Activated CD4-positive, alpha-beta memory T cell treated with anti-CD3 and anti-CD28 coated beads for 36 hours (primary cell): ENCODE measurements at regions of chr18 and their contacts with region 1.

Region 1: GRCh38 chr18:24019641-24020331 is 5.2 kb downstream of the TTC39C start:
- DNase-seq: peak; percentile 78
- H3K4me3 Mint-ChIP-seq: peak overlapping the region; percentile 75
- H3K27ac Mint-ChIP-seq: peak overlapping the region; percentile 89
- H3K4me1 Mint-ChIP-seq: peaks cover 85% of the 10 kb centered on the region
- H3K27me3 Mint-ChIP-seq: no peaks in the 10 kb centered on the region

Region 2: DNA sequence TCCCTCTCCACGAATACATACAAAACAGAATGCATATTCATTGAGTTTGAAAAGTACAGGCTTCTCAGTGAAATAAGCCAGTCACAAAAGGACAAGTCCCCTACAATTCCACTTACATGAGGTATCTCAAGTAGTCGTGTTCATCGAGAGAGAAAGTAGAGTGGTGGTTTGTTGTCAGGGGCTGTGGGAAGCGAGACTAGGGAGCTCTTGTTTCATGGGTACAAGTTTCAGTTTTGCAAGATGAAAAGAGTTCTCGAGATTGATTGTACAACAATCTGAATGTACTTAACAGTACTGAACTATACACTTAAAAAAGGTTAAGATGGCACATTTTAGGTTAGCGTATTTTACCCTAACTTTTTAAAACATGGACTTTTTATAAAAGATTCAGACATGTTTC is 76.7 kb before region 1 on chr18:
- CTCF ChIA-PET with region 1: no interaction called
- POLR2A ChIA-PET with region 1: no interaction called
- intact Hi-C with region 1: loop called (anchors 2 kb)
- DNase-seq: peak; percentile 78
- H3K4me3 Mint-ChIP-seq: peak overlapping the region; percentile 13
- H3K27ac Mint-ChIP-seq: no peak overlapping the region
- H3K4me1 Mint-ChIP-seq: peaks cover 36% of the 10 kb centered on the region
- H3K27me3 Mint-ChIP-seq: peaks cover 8% of the 10 kb centered on the region

Region 3: GRCh38 chr18:23994361-23994902 is 25.4 kb before region 1 on chr18:
- CTCF ChIA-PET with region 1: interaction called, 5 read pairs
- POLR2A ChIA-PET with region 1: interaction called, 8 read pairs
- intact Hi-C with region 1: loop called (anchors 1 kb)
- DNase-seq: peak; percentile 64
- H3K4me3 Mint-ChIP-seq: peak overlapping the region; percentile 76
- H3K27ac Mint-ChIP-seq: peak overlapping the region; percentile 86
- H3K4me1 Mint-ChIP-seq: peaks cover 73% of the 10 kb centered on the region
- H3K27me3 Mint-ChIP-seq: no peaks in the 10 kb centered on the region

Region 4: DNA sequence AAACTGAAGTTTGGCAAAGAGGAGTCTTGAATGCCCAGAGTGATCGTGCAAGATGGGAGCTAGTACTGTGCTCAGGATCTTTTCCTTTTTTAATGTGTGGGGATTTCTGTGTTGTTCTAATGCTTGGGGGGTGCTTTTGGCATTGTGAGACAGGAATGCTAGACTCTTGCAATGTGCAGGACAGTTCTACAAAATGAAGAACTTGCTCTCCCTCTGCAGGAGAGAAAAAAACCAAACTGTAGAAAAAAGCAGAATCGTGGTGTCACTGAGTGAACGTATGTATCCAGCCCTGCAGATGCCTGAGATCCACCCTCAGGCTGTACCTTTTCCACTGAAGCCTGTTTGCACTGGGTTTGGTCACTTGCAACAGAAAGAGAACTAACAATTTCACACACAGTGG is 17.3 kb before region 1 on chr18:
- CTCF ChIA-PET with region 1: interaction called, 5 read pairs
- POLR2A ChIA-PET with region 1: interaction called, 8 read pairs
- intact Hi-C with region 1: loop called (anchors 1 kb)
- DNase-seq: no peak
- H3K4me3 Mint-ChIP-seq: no peak overlapping the region
- H3K27ac Mint-ChIP-seq: no peak overlapping the region
- H3K4me1 Mint-ChIP-seq: peaks cover 77% of the 10 kb centered on the region
- H3K27me3 Mint-ChIP-seq: no peaks in the 10 kb centered on the region

Region 5: DNA sequence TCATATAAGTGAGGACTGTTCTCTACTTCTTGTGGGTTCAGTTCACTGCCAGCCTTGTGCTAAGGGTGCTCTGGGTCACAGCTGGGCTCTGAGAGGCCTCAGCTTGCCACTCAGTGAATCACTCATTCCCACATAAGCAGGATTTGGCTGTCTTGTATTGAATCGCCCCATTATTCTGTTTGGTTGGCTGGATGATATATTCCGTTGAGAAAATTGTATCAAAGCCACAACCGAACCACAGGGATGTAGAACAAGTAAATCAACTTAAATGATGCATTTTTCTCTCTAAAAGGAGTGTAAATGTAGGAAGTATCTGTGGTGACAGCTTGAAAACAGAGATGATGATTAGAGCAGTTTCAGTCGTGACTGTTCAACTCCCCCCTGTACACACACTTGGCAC is 34.3 kb after region 1 on chr18:
- CTCF ChIA-PET with region 1: no interaction called
- POLR2A ChIA-PET with region 1: interaction called, 6 read pairs
- intact Hi-C with region 1: loop called (anchors 1 kb)
- DNase-seq: peak; percentile 60
- H3K4me3 Mint-ChIP-seq: no peak overlapping the region
- H3K27ac Mint-ChIP-seq: peak overlapping the region; percentile 20
- H3K4me1 Mint-ChIP-seq: peaks cover 80% of the 10 kb centered on the region
- H3K27me3 Mint-ChIP-seq: no peaks in the 10 kb centered on the region

Region 6: DNA sequence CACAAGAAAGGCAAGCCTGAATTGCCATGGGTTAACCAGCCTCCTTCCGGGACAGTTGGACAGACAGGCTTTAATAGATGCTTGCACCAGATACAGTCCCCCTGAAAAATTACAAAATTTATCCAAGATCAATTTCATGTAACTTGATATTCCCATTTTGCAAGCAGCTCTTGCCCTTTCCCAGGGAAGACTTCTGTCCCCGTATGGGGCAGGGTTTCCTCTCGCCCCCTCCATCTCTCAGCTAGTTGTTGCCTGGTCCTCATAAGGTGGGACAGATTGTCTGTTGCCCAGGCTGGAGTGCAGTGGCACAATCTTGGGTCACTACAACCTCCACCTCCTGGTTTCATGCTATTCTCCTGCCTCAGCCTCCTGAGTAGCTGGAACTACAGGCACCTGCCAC is 55.9 kb after region 1 on chr18:
- CTCF ChIA-PET with region 1: interaction called, 3 read pairs
- POLR2A ChIA-PET with region 1: interaction called, 3 read pairs
- intact Hi-C with region 1: loop called (anchors 1 kb)
- DNase-seq: no peak
- H3K4me3 Mint-ChIP-seq: peak overlapping the region; percentile 14
- H3K27ac Mint-ChIP-seq: peak overlapping the region; percentile 63
- H3K4me1 Mint-ChIP-seq: peaks cover 56% of the 10 kb centered on the region
- H3K27me3 Mint-ChIP-seq: no peaks in the 10 kb centered on the region

Region 7: GRCh38 chr18:24108639-24109306 is 89.0 kb after region 1 on chr18:
- CTCF ChIA-PET with region 1: no interaction called
- POLR2A ChIA-PET with region 1: no interaction called
- intact Hi-C with region 1: no loop called
- DNase-seq: no peak
- H3K4me3 Mint-ChIP-seq: no peak overlapping the region
- H3K27ac Mint-ChIP-seq: peak overlapping the region; percentile 42
- H3K4me1 Mint-ChIP-seq: peaks cover 21% of the 10 kb centered on the region
- H3K27me3 Mint-ChIP-seq: no peaks in the 10 kb centered on the region

Region 8: DNA sequence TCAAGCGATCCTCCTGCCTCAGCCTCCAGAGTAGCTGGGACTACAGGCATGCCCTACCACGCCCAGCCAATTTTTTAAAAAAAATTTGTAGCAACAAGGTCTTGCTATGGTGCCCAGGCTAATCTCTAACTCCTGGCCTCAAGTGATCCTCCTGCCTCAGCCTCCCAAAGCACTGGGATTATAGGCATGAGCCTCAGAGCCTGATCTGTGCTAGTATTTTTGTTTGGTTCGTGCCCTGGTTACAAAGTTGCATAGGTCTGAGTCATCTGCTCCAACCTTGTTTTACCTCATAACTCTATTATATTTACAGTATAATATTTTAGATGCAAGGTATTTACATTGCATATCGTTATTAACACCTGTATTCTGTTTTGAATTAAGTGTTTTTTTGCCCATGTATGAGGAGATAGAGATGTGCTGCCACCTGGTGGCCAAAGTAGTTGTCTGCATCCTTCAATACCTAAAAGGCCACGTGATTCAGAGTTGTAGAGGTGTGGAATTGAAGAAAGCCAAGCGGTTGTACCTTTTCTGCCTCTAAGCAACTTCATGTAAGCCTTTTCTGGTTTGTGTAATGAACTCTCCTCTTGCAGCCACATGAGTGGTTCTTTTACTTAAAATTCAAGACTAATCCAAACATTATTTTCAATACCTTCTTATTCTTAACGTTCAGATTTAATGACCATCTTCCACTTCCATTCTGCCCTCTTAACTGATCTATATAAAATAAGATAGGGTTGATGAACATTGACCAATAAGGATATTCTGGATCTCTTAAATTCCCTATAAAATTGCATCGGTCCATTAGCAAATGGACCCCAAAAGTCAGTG is 99.2 kb after region 1 on chr18:
- CTCF ChIA-PET with region 1: no interaction called
- POLR2A ChIA-PET with region 1: no interaction called
- intact Hi-C with region 1: loop called (anchors 2 kb)
- DNase-seq: peak; percentile 85
- H3K4me3 Mint-ChIP-seq: no peak overlapping the region
- H3K27ac Mint-ChIP-seq: peak overlapping the region; percentile 49
- H3K4me1 Mint-ChIP-seq: peaks cover 26% of the 10 kb centered on the region
- H3K27me3 Mint-ChIP-seq: no peaks in the 10 kb centered on the region

Region 9: GRCh38 chr18:25019086-25019860 is 999.5 kb after region 1 on chr18:
- CTCF ChIA-PET with region 1: no interaction called
- POLR2A ChIA-PET with region 1: no interaction called
- intact Hi-C with region 1: no loop called
- DNase-seq: no peak
- H3K4me3 Mint-ChIP-seq: no peak overlapping the region
- H3K27ac Mint-ChIP-seq: no peak overlapping the region
- H3K4me1 Mint-ChIP-seq: no peaks in the 10 kb centered on the region
- H3K27me3 Mint-ChIP-seq: no peaks in the 10 kb centered on the region